Heart right ventricle (tissue), 16 donors: ENCODE measurements at regions of chr2 and their contacts with region 1.

Region 1: GRCh38 chr2:2031101-2031500 is 286.8 kb upstream of the PXDN start:
- DNase-seq: no peak
- ATAC-seq: no peak
- H3K4me3 ChIP-seq: no peak overlapping the region
- H3K27ac ChIP-seq: no peak overlapping the region
- H3K4me1 ChIP-seq: no peaks in the 10 kb centered on the region
- H3K27me3 ChIP-seq: no peaks in the 10 kb centered on the region
- CTCF ChIP-seq: no peak

Region 2: DNA sequence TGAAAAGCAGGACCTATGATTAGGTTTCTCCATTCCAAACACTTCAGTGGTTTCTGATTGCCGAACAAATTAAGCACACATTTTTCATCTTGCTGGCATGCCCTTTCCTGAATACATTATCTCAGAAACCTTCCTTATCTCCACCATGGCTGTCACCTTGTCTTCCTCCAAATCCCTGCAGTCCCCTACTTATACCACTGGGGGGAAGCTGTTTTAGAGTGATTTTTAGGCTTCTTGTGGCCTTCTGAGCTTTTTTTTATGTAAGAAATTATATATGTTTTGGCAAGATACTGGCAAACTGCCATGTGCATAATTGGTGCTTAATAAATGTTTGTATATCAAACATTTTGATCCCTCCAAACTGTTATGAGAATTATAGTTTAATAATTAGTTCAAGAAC is 70.8 kb after region 1 on chr2:
- intact Hi-C with region 1: loop called in 1 of 10 experiments (anchors 5 kb)
- DNase-seq: no peak
- ATAC-seq: no peak
- H3K4me3 ChIP-seq: no peak overlapping the region
- H3K27ac ChIP-seq: no peak overlapping the region
- H3K4me1 ChIP-seq: peaks cover 0 to 4% (median under 1%) of the 10 kb centered on the region in 9 donors
- H3K27me3 ChIP-seq: peaks cover 0 to 6% (median 0%) of the 10 kb centered on the region in 7 donors
- CTCF ChIP-seq: peak in 5 of 9 donors; percentile 9 to 28 (median 13)